ENCODE measurements at regions of chr2 and their contacts with region 1.

Region 1: DNA sequence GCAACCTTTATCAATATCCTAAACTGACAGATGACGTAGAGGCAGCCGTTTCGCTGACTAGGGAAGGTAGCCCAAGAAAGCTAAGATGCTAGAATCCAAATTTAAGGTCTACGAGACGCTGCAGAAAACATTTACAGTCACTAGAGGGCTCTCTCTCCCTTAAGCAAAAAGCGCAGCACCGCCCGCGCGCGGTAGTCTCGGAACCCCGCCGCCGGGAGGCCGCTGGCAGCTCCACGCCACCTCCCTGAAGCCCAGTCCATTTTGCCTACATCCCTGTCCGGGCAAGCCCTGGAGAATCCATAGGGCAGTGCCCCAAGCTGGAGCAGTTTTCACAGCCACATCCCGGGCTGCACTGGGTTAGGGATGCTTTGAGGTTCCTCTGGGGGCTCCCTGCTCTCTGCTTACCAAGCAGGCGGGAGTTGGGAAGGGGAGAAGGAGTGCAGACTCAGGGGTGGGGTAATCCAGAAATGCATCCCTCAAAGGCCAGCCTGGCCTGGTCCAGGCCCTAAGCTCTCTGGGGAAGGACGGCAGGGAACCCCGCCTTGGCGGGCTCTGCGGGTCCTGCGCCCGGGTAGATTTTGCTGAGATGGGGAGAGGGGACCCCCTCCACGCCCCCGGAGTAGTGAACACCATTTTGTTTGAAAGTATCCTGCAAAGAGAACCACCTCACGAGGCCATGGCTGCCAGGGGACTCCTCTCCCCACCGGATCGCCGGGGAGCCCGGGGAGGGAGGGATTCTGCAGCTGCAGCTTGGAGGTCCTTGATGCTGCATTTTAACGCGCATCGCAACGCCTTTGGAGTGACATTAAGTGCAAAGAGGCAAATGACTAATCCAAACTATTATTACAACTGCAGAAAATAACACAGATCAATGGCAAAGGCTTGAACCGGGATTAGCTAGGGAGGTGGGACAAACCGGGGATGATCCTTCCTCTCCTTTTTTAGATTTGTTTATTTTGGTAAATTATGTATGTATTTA is 1.3 kb upstream of the DPYSL5 start:
- DNase-seq: peak; percentile 77
- ATAC-seq: peak; percentile 76 to 82

Region 2: GRCh38 chr2:26692279-26692896 is 154.2 kb before region 1 on chr2 and contains the start of gene KCNK3:
- intact Hi-C with region 1: no loop called
- DNase-seq: peak; percentile 72
- ATAC-seq: peak; percentile 67 to 75
- total RNA-seq, gene KCNK3: 30.9 to 35.4 TPM

Region 3: GRCh38 chr2:26922405-26923188 is 76.0 kb after region 1 on chr2:
- intact Hi-C with region 1: loop called in 1 of 2 experiments (anchors 2 kb)
- DNase-seq: no peak
- ATAC-seq: peak; percentile 77 to 78

Region 4: GRCh38 chr2:26942543-26943295 is 96.1 kb after region 1 on chr2:
- intact Hi-C with region 1: loop called (anchors 1 to 5 kb)
- DNase-seq: peak; percentile 70
- ATAC-seq: peak; percentile 34 to 41